Prostate gland (tissue), 2 donors: ENCODE measurements at regions of chr20 and their contacts with region 1.

Region 1: DNA sequence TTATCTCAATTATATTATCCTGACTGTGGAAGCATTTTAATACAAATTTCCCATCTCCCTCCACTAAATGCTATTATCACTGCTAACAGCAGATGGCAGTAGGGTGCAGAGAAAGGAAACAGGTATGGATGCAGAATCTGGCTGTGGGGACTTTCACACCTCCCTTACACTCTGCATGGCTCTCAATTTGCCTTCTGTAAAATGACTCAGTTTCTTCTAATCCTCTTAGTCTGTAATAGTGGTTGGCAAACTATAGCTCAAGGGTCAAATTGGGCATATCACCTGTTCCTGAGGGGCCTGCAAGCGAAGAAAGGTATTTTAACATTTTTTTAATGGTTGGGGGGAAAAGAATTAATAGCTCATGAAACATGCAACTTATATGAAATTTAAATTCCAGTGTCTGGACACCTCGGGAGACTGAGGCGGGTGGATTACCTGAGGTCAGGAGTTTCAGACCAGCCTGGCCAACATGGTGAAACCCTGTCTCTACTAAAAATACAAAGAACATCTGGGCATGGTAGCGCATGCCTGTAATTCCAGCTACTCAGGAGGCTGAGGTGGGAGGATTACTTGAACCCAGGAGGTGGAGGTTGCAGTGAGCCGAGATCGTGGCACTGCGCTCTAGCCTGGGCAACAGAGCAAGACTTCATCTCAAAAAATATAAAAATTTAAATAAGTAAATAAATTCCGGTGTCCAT is 83.5 kb downstream of the ZMYND8 start:
- DNase-seq: peak; percentile 71
- H3K4me3 ChIP-seq: no peak overlapping the region
- H3K27ac ChIP-seq: peak overlapping the region; percentile 37 to 59
- H3K4me1 ChIP-seq: no peaks in the 10 kb centered on the region
- H3K27me3 ChIP-seq: no peaks in the 10 kb centered on the region
- CTCF ChIP-seq: peak; percentile 78 to 98 (median 94)
- POLR2A ChIP-seq: no peak

Region 2: GRCh38 chr20:46752728-46753127 is 520.3 kb before region 1 on chr20:
- intact Hi-C with region 1: loop called (anchors 5 kb)
- DNase-seq: peak; percentile 33
- H3K4me3 ChIP-seq: no peak overlapping the region
- H3K27ac ChIP-seq: no peak overlapping the region
- H3K4me1 ChIP-seq: no peaks in the 10 kb centered on the region
- H3K27me3 ChIP-seq: no peaks in the 10 kb centered on the region
- CTCF ChIP-seq: peak; percentile 44 to 69 (median 64)
- POLR2A ChIP-seq: no peak

Region 3: GRCh38 chr20:47318586-47319516 is 45.8 kb after region 1 on chr20:
- intact Hi-C with region 1: loop called (anchors 2 kb)
- DNase-seq: peak; percentile 77
- H3K4me3 ChIP-seq: peak overlapping the region in 1 of 2 donors; percentile 9
- H3K27ac ChIP-seq: peak overlapping the region; percentile 91 to 96
- H3K4me1 ChIP-seq: peaks cover 45% of the 10 kb centered on the region
- H3K27me3 ChIP-seq: no peaks in the 10 kb centered on the region
- CTCF ChIP-seq: no peak
- POLR2A ChIP-seq: peak; percentile 17

Region 4: DNA sequence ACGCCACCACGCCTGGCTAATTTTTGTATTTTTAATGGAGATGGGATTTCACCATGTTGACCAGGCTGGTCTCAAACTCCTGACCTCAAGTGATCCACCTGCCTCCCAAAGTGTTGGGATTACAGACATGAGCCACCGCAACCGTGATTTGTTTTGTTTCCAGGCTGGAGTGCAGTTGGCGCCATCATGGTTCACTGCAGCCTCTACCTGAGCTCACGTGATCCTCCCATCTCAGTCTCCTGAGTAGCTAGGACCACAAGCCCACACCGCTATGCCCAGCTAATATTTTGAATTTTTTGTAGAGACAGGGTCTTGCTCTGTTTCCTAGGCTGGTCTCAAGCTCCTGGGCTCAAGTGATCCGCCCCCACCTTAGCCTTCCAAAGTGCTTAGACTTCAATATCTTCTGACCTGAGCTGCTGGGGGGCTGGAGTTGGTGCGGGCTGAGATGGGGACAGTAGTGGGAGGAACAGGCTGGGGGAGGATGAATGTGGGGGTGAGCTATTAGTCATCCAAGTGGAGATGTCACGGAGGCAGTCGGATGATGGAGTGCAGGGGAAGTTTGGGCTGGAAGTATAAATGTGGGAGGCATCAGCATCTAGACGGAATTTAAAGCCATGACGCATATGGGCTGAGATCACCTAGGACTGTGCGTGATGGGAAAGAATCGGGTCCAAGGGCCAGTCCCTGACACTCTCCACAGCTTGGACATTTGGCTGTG is 106.5 kb after region 1 on chr20:
- intact Hi-C with region 1: loop called (anchors 1 kb)
- DNase-seq: no peak
- H3K4me3 ChIP-seq: no peak overlapping the region
- H3K27ac ChIP-seq: no peak overlapping the region
- H3K4me1 ChIP-seq: no peaks in the 10 kb centered on the region
- H3K27me3 ChIP-seq: no peaks in the 10 kb centered on the region
- CTCF ChIP-seq: no peak
- POLR2A ChIP-seq: no peak

Region 5: DNA sequence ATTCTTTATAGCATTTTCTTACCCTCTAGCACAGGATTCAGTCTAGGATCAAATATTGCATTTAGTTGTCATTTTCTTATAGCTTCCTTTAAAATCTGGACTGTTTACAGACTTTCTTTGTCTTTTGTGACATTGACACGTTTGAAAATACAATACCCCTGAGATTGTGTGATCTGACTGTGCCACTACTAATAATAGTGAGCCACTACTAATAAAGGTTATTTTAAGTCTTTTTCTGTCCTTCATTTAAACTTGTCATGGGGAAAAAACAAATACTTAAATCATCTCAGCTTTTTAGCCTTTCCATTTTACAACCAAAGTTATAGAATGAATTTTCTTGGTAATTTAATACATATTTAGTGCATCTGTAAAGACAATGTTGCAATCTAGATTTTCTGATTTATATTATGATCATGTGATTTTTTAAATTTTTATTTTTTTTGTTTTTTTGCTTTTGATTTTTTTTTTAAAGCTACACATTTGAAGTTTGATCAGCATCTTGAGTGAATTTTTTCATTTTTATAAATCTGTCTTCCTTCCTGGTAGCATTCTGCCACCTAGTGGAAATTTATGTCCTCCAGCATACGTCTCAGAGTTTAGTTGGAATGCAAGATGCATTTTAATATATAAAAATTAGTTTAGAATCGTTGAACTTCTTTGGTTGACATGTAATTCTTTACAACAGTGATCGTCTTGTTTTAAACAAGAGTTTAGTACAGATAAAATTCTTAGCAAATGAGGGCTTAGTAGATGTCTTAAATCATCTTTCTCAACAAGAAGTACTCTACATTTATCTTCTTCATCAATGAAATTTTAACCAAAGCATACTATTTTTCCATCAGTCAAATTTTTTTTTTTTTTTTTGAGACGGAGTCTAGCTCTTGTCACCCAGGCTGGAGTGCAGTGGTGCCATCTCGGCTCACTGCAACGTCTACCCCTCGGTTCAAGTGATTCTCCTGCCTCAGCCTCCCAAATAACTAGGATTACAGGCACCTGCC is 348.1 kb after region 1 on chr20:
- intact Hi-C with region 1: loop called (anchors 5 kb)
- DNase-seq: no peak
- H3K4me3 ChIP-seq: no peak overlapping the region
- H3K27ac ChIP-seq: no peak overlapping the region
- H3K4me1 ChIP-seq: no peaks in the 10 kb centered on the region
- H3K27me3 ChIP-seq: no peaks in the 10 kb centered on the region
- CTCF ChIP-seq: peak; percentile 54 to 85 (median 76)
- POLR2A ChIP-seq: no peak